ENCODE measurements at regions of chr2 and their contacts with region 1.

Region 1: GRCh38 chr2:170409164-170409535 is 231.2 kb downstream of the MYO3B start:
- DNase-seq: peak; percentile 59 to 84
- ATAC-seq: peak; percentile 71

Region 2: DNA sequence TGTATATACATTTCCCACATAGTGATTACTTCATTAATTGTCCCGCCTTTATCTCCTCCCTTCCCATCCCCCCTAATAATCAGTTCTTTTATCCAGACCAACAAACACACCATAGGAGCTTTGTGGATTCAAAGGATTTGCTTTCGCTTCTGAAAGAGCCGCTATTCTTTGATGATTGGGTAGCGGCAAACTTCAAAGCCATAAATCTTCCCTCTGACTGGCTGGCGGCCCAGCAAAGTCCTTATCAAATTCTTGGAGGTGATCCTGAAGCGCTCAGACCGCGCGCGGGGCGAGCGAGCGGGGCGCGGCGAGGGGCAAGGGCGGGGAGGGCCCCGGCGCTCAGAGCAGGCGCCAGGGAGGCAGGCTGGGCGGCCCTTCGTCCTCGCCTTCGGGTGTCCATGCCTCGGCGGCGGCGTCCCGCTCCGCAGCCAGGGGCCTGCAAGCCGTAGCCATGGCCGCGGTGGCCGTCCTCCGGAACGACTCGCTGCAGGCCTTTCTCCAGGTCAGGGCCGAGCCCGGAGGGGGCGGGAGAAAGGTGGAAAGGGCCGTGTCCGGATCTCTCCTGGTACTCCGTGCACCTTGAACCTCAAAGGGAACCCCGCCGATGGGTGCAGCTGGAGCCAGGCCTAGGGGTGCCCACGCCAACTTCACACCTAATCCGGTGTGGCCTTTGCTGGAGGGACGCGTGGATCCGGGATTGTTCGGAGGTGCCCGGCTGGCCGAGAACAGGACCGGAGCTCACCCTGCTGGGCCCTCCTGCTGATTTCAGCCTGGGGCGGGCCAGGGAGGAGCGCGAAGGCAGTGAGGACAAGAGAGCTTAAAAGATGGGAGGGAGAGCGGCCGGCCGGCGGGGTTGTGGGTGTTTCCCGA is 306.1 kb after region 1 on chr2 and contains the start of gene SP5:
- intact Hi-C with region 1: loop called in 1 of 2 experiments (anchors 10 kb)
- DNase-seq: peak; percentile 41 to 52
- ATAC-seq: peak; percentile 60
- total RNA-seq, gene SP5: 1.3 to 1.7 TPM

Region 3: GRCh38 chr2:170815746-170816503 is 406.8 kb after region 1 on chr2:
- intact Hi-C with region 1: loop called in 1 of 2 experiments (anchors 10 kb)
- DNase-seq: peak in 1 of 2 donors; percentile 73
- ATAC-seq: peak; percentile 72

Measured in left colon (tissue), 2 donors.